ENCODE measurements at regions of chr3 and their contacts with region 1.

Region 1: DNA sequence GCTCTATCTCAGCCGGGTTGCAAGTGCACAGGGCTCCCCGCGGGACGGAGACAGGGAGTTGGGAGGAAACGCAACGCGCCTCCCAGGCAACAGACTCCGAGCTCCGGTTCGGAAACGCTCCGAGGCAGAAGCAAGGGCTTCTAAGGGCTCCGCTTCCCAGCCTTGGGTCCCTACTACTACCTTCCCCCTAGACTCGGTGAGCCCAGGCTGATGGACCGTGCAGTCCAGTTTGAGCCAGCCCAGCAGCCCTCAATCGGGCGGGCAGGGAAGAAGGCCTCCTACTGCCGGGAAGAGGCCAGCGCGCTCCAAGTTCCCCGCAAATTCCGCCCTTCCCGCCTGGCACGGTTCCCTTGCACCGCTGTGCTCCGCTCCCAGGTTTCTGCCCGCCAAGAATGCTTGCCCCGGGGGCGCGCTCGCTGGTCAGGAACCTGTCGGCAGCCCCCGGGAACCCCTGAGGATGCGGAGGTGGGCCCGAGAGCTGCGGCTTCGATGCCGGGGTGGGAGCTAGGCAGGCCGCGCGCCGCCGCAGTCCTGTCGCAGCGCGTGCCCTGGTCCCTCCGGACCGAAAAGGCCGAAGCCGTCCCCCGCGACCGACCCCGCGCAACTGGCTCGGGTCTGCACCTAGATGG is 728 bp downstream of the TRANK1 start:
- DNase-seq: peak; percentile 53
- CTCF ChIP-seq: peak; percentile 6

Region 2: GRCh38 chr3:36933540-36934296 is 10.4 kb before region 1 on chr3:
- CTCF ChIA-PET with region 1: interaction called, 19 read pairs
- POLR2A ChIA-PET with region 1: interaction called, 3 read pairs
- DNase-seq: no peak
- CTCF ChIP-seq: no peak

Region 3: DNA sequence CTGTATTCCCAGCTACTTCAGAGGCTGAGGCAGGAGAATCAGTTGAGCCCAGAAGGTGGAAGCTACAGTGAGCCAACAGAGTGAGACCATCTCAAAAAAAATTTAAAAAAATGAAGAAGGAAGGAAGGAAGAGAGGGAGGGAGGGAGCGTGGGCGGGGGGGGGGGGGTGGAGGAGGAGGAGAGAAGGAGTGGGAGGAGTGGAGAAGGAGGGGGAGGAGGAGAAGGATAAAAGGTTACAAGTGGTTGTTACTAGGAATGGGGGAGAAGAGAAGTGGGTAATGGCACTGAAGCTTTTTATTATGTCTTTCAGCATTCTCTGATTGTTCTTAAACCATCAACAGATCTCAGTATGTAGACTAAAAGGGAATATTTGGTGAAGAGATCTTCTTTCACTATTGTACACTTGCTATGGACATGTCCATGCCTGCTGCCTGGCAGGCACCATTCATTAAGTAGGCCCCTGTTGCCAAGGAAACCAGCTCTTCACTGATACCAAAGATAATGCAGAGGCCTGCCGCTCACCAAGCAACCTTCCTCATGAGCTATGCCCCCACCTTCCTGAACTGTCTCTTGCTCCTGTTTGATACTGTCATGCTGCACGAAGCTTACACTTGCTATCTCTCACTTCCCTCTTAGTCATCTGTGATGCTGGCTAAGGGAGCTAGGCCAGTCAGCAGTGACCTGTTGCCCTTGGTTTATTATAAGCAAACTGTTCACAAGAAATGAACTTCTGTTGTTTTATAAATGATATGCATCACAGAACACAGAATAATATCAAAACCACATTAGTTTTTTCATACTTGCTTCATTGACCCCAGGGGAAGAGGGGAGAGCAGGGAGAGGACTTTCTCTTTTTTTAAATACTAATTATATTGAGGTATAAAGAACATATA is 25.7 kb after region 1 on chr3:
- CTCF ChIA-PET with region 1: no interaction called
- POLR2A ChIA-PET with region 1: no interaction called
- DNase-seq: peak; percentile 82
- CTCF ChIP-seq: no peak